ENCODE measurements at regions of chr2 and their contacts with region 1.

Region 1: DNA sequence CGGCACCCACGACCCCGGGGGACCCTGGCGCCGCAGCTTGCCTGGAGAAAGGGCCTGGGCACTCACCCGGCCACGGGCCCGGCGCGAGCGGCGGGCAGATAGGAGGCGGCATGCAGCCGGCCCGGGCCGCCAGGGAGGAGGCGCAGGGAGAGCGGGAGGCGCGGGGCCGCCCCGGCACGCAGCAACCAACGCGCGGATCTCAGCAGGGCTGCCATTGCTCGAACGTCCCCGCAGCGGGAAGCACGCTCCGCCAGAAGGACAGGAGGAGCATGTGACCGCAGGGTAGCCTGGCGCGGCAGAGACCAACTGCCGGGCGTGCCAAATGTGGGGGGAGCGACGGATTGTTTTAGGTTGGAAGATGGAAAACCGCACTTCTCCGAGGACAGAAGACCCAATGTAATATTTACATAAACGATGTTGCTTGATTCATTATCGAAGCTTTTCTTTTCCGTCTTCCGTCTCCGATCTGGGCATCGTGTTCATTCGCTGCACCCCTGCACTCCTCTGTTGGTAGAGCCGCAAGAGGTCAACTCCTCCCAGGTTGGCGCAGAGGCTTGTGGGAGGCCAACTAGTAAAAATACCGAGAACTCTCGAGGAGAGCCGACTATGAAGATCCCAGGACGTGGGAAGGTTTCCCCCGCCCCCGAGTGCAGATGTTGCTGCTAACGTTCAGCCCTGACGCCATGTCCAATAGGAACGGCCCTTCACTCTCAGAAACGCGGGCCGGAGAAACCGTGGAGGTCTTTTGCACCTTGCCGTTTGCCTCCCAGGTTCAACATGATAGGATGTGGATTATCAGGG is at the start of gene LRPPRC:
- DNase-seq: peak; percentile 86 to 95
- ATAC-seq: peak; percentile 97 to 99 (median 98)
- H3K4me3 ChIP-seq: peak within 1 kb of the TSS; percentile 86 to 100 (median 98)
- H3K27ac ChIP-seq: peak within 1 kb of the TSS; percentile 42 to 93 (median 84)
- H3K4me1 ChIP-seq: peaks cover 5 to 45% (median 25%) of the 10 kb centered on the region in 9 donors
- H3K27me3 ChIP-seq: no peaks in the 10 kb centered on the region
- CTCF ChIP-seq: no peak
- total RNA-seq, gene LRPPRC: 77.1 to 123 (median 114) TPM

Region 2: DNA sequence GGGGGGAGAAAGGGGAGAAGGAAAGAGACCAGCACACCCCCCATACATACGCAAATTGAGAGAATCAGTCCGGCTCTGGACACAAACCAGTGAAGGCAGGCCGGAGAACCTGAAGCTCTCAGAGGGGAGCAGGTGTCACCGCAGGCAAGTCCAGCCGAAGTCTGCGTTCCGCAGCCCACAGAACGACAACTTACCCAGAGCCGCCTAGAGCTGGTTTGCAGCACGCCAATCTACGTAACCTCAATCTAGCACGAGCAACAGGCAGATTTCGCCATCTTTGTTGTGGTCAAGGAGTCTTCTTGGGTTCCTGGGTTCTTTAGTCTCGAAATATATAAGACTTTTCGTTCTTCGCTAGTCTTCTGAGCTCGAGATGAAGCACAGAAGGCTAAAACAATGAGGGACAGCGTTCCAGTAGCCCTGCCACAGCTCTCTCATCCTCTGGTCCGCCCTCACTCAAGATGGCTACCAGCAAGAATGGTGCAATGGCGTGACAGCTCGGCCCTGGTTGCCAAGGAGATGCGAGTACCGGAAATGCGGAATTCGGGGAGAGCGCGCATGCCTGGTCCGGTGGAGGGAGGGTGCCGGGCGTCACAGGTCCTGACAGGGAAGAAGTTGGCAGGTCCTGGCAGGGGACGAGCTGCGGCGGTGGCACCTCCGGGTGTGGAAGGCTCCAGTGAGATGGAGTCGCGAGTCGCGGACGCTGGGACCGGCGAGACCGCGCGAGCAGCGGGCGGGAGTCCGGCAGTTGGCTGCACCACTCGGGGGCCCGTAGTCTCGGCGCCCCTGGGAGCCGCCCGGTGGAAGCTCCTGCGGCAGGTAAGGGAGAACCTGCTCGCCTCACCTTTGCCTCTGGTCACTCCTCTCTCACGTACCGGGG is 365.6 kb after region 1 on chr2 and contains the starts of genes CAMKMT and PREPL:
- intact Hi-C with region 1: loop called in 2 of 10 experiments (anchors 5 to 10 kb)
- DNase-seq: peak; percentile 98 to 99
- ATAC-seq: peak; percentile 97 to 99 (median 98)
- H3K4me3 ChIP-seq: peak within 1 kb of the TSS; percentile 42 to 98 (median 88)
- H3K27ac ChIP-seq: peak within 1 kb of the TSS; percentile 93 to 99 (median 96)
- H3K4me1 ChIP-seq: peaks cover 0 to 44% (median 33%) of the 10 kb centered on the region in 9 donors
- H3K27me3 ChIP-seq: no peaks in the 10 kb centered on the region
- CTCF ChIP-seq: no peak
- total RNA-seq, gene CAMKMT: 4.1 to 6.4 (median 4.9) TPM
- total RNA-seq, gene PREPL: 69.1 to 132 (median 101) TPM

Measured in heart right ventricle (tissue), 16 donors.